H1 (cell line): ENCODE measurements at regions of chrX and their contacts with region 1.

Region 1: GRCh38 chrX:49868739-49869138 is 10.5 kb upstream of the USP27X start:
- DNase-seq: no peak
- H3K4me3 ChIP-seq: no peak overlapping the region
- H3K27ac ChIP-seq: no peak overlapping the region
- H3K4me1 ChIP-seq: no peaks in the 10 kb centered on the region
- H3K27me3 ChIP-seq: no peaks in the 10 kb centered on the region
- CTCF ChIP-seq: no peak
- EP300 ChIP-seq: no peak
- POLR2A ChIP-seq: no peak
- RAD21 ChIP-seq: no peak

Region 2: DNA sequence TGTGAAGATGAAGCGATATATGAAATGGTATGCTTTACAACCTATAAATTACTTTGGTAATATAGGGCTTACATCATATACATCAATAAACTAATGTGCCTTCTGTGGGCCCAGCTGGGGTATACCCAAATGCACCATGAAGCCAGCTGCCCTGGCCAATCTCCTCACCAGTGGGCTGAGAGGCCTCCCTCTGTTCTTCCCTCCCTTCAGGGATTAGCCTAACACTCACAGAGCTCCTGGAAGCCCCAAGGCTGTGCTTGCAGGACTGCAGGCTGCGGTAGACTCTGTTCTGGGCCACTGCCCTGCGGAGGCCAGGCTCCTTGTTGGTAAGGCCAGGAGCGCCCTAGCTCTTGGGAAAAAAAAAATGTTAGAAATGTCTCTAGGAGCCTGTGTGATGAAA is 206.9 kb before region 1 on chrX:
- CTCF ChIA-PET with region 1: no interaction called
- POLR2A ChIA-PET with region 1: no interaction called
- DNase-seq: no peak
- H3K4me3 ChIP-seq: no peak overlapping the region
- H3K27ac ChIP-seq: no peak overlapping the region
- H3K4me1 ChIP-seq: no peaks in the 10 kb centered on the region
- H3K27me3 ChIP-seq: no peaks in the 10 kb centered on the region
- CTCF ChIP-seq: no peak
- EP300 ChIP-seq: no peak
- POLR2A ChIP-seq: no peak
- RAD21 ChIP-seq: no peak

Region 3: DNA sequence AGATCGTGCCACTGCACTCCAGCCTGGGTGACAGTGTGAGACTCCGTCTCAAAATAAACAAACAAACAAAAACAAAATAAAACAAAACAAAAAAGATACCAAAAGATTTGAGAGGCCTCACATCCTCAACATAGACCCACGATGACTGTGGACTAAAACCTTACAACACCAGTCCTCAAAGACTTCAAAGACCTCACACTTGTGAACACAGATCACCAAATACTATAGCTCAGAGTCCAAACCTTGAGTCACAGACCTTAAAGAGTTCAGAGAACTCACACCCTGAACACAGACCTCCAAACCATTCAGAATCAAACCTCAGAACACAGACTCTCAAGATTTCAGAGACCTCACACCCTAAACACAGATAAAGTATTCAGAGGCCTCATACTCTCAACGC is 52.3 kb before region 1 on chrX:
- CTCF ChIA-PET with region 1: no interaction called
- POLR2A ChIA-PET with region 1: no interaction called
- DNase-seq: no peak
- H3K4me3 ChIP-seq: no peak overlapping the region
- H3K27ac ChIP-seq: no peak overlapping the region
- H3K4me1 ChIP-seq: no peaks in the 10 kb centered on the region
- H3K27me3 ChIP-seq: no peaks in the 10 kb centered on the region
- CTCF ChIP-seq: no peak
- EP300 ChIP-seq: no peak
- POLR2A ChIP-seq: no peak
- RAD21 ChIP-seq: no peak

Region 4: DNA sequence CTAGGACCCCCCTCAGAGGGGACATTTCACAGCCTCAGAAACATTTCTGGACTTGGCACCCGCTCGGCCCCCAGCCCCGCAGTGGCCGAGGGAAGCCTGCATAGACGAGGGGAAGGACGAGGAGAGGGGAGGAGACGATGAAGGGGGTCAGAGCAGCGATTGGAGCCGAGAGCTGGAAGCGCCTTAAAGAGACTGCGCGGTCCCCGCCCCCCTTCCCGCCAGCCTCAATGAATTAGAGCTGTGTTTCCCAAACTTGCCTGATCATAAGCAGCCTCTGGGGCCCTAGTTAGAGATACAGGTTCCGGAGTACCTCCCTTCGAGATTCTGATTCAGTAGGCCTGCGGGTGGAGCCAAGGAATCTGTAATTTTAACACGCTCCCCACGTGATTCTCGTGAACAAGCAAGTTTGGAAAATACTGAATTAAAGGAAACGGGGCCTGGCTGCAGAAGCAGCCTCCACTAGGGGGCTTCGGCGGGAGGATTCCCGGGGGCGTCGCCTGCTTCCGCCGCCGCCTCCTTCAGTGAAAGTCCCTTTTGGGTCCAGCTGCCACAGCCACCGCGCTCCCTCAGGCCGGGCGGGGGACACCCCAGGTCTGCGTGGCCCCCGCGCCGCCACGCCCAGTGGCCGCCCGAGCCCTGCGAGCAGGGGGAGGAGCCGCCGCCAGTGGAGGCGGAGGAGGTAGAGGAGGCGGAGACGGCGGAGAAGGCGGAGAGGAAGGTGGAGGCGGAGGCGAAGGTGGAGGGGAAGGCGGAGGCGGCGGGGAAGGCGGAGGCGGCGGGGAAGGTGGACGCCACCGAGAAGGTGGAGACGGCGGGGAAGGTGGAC is 10.3 kb after region 1 on chrX and contains the start of gene USP27X:
- CTCF ChIA-PET with region 1: interaction called, 11 read pairs
- POLR2A ChIA-PET with region 1: no interaction called
- DNase-seq: peak; percentile 17 to 65
- H3K4me3 ChIP-seq: peak within 1 kb of the TSS; percentile 43 to 82 (median 60)
- H3K27ac ChIP-seq: no peak within 1 kb of the TSS; the same call in 1 of the 2 replicates
- H3K4me1 ChIP-seq: peaks cover 0 to 5% (median 3%) of the 10 kb centered on the region in 4 experiments; a peak in 3 of 7 replicates
- H3K27me3 ChIP-seq: no peaks in the 10 kb centered on the region; a peak in 3 of 7 replicates
- CTCF ChIP-seq: peak; percentile 33 to 38 (median 35)
- EP300 ChIP-seq: no peak
- POLR2A ChIP-seq: peak in 1 of 2 experiments; percentile 34; a peak in 1 of 3 replicates
- RAD21 ChIP-seq: no peak
- total RNA-seq, gene USP27X: 4.7 and 5.7 TPM in 2 replicates